Activated naive CD4-positive, alpha-beta T cell treated with anti-CD3 and anti-CD28 coated beads for 36 hours (primary cell): ENCODE measurements at regions of chr22 and their contacts with region 1.

Region 1: GRCh38 chr22:37676736-37677492 is 1.5 kb downstream of the LGALS1 start:
- DNase-seq: peak; percentile 97
- H3K4me3 Mint-ChIP-seq: peak overlapping the region; percentile 83
- H3K27ac Mint-ChIP-seq: peak overlapping the region; percentile 95
- H3K4me1 Mint-ChIP-seq: peaks cover 56% of the 10 kb centered on the region
- H3K27me3 Mint-ChIP-seq: no peaks in the 10 kb centered on the region

Region 2: GRCh38 chr22:37623075-37624016 is 53.6 kb before region 1 on chr22:
- CTCF ChIA-PET with region 1: interaction called, 32 read pairs
- intact Hi-C with region 1: loop called (anchors 1 kb)
- DNase-seq: peak; percentile 86
- H3K4me3 Mint-ChIP-seq: no peak overlapping the region
- H3K27ac Mint-ChIP-seq: peak overlapping the region; percentile 84
- H3K4me1 Mint-ChIP-seq: peaks cover 40% of the 10 kb centered on the region
- H3K27me3 Mint-ChIP-seq: no peaks in the 10 kb centered on the region

Region 3: GRCh38 chr22:37633625-37634416 is 43.1 kb before region 1 on chr22:
- CTCF ChIA-PET with region 1: interaction called, 32 read pairs
- intact Hi-C with region 1: no loop called
- DNase-seq: peak; percentile 79
- H3K4me3 Mint-ChIP-seq: peak overlapping the region; percentile 54
- H3K27ac Mint-ChIP-seq: peak overlapping the region; percentile 83
- H3K4me1 Mint-ChIP-seq: peaks cover 55% of the 10 kb centered on the region
- H3K27me3 Mint-ChIP-seq: no peaks in the 10 kb centered on the region

Region 4: GRCh38 chr22:37643225-37643847 is 33.6 kb before region 1 on chr22:
- CTCF ChIA-PET with region 1: interaction called, 260 read pairs
- intact Hi-C with region 1: loop called (anchors 1 kb)
- DNase-seq: peak; percentile 93
- H3K4me3 Mint-ChIP-seq: no peak overlapping the region
- H3K27ac Mint-ChIP-seq: peak overlapping the region; percentile 47
- H3K4me1 Mint-ChIP-seq: peaks cover 34% of the 10 kb centered on the region
- H3K27me3 Mint-ChIP-seq: no peaks in the 10 kb centered on the region

Region 5: GRCh38 chr22:37658133-37659065 is 18.5 kb before region 1 on chr22 and contains the start of gene PDXP:
- CTCF ChIA-PET with region 1: interaction called, 34 read pairs
- intact Hi-C with region 1: loop called (anchors 1 kb)
- DNase-seq: peak; percentile 98
- H3K4me3 Mint-ChIP-seq: peak within 1 kb of the TSS; percentile 92
- H3K27ac Mint-ChIP-seq: peak within 1 kb of the TSS; percentile 83
- H3K4me1 Mint-ChIP-seq: peaks cover 39% of the 10 kb centered on the region
- H3K27me3 Mint-ChIP-seq: no peaks in the 10 kb centered on the region
- total RNA-seq, gene PDXP: 17.4 to 19.2 TPM

Region 6: GRCh38 chr22:37741312-37741795 is 64.4 kb after region 1 on chr22:
- CTCF ChIA-PET with region 1: no interaction called
- intact Hi-C with region 1: no loop called
- DNase-seq: no peak
- H3K4me3 Mint-ChIP-seq: no peak overlapping the region
- H3K27ac Mint-ChIP-seq: no peak overlapping the region
- H3K4me1 Mint-ChIP-seq: peaks cover 11% of the 10 kb centered on the region
- H3K27me3 Mint-ChIP-seq: no peaks in the 10 kb centered on the region

Region 7: GRCh38 chr22:37807410-37808293 is 130.7 kb after region 1 on chr22 and contains the start of gene GCAT:
- CTCF ChIA-PET with region 1: interaction called, 4 read pairs
- intact Hi-C with region 1: loop called (anchors 5 kb)
- DNase-seq: peak; percentile 96
- H3K4me3 Mint-ChIP-seq: peak within 1 kb of the TSS; percentile 80
- H3K27ac Mint-ChIP-seq: peak within 1 kb of the TSS; percentile 61
- H3K4me1 Mint-ChIP-seq: peaks cover 45% of the 10 kb centered on the region
- H3K27me3 Mint-ChIP-seq: peaks cover 48% of the 10 kb centered on the region
- total RNA-seq, gene GCAT: 26.9 to 27.2 TPM

Region 8: GRCh38 chr22:37843741-37843990 is 166.8 kb after region 1 on chr22:
- CTCF ChIA-PET with region 1: no interaction called
- intact Hi-C with region 1: loop called (anchors 5 kb)
- DNase-seq: no peak
- H3K4me3 Mint-ChIP-seq: peak overlapping the region; percentile 83
- H3K27ac Mint-ChIP-seq: no peak overlapping the region
- H3K4me1 Mint-ChIP-seq: peaks cover 30% of the 10 kb centered on the region
- H3K27me3 Mint-ChIP-seq: no peaks in the 10 kb centered on the region

Region 9: DNA sequence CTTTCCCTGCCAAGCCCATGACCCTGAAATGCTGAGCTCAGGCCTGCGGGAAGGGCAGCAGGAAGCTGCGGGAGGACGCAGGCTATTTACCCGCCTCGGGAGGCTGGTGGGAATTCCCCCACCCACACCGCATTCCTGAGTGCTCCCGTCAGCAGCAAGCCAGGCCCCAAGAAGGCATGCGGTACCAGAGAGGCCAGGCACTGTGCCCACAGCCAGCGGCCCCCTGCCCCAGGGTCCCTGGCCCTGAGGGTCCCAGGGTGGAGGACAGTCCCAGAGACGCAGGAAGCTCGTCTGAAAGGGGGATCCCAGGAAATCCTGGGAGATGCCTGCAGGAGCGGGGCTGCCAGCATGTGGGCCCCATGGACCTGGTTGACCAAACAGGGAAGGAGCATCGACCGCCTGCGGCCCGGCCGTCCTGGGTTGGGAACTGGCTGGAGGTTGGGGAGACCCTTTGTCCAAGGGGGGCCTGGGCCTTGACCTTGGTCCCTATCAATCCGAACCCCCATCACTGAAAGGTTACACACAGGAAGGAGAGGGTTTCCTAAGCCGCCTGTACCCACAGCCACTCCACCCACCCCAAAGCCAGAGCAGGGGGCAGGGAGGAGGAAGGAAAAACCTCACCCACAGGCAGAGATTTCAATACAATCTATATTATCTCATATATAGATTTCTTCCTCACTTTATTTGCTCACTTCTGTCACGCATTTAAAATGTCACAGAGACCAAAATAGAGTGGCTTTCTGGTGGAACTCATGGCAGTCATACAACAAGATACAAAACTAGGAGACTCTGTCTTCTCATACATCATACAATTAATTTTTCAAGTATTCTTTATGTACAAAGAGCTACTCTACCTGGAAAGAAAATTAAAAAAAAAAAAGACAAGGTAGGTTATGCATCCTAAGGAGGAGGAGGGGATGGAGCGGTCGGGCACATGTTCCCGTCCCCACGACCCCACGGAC is 542.0 kb after region 1 on chr22:
- CTCF ChIA-PET with region 1: no interaction called
- intact Hi-C with region 1: no loop called
- DNase-seq: peak; percentile 52
- H3K4me3 Mint-ChIP-seq: no peak overlapping the region
- H3K27ac Mint-ChIP-seq: peak overlapping the region; percentile 27
- H3K4me1 Mint-ChIP-seq: peaks cover 16% of the 10 kb centered on the region
- H3K27me3 Mint-ChIP-seq: no peaks in the 10 kb centered on the region